MCF 10A (cell line): ENCODE measurements at regions of chr15 and their contacts with region 1.

Region 1: GRCh38 chr15:55917881-55918296 is 75.5 kb downstream of the NEDD4 start:
- DNase-seq: peak; percentile 88
- H3K4me3 Mint-ChIP-seq: no peak overlapping the region
- H3K27ac Mint-ChIP-seq: peak overlapping the region; percentile 67
- H3K4me1 Mint-ChIP-seq: peaks cover 17% of the 10 kb centered on the region
- H3K27me3 Mint-ChIP-seq: no peaks in the 10 kb centered on the region
- CTCF ChIP-seq: peak; percentile 52

Region 2: DNA sequence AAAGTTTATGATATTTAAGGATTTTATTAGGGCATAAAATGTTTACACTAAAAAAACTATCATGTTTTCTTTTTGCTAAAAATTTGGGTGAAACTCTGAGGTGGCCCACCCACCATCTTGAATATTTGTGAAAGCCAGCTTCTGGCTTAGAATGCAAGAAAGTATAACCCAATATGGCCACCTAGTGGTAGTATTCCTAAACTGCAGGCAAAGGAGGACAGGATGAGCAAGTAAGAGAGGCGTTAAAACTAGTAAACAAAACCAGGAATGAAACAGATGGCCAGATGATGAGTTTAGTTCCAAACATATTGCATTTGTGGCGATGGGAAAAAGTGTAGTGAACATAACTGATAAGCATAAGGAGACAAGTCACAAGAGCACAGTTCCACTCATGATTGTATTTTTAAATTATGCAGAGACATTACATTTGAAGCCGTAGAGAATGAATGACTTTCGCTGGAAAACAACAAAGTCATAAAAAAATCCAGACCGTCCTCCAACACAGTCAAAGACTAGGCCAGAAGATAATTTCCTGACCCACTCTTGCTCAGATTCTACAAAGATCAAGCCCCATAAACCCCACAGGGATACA is 71.7 kb before region 1 on chr15:
- CTCF ChIA-PET with region 1: interaction called, 13 read pairs
- POLR2A ChIA-PET with region 1: interaction called, 8 read pairs
- intact Hi-C with region 1: loop called (anchors 5 kb)
- DNase-seq: peak; percentile 81
- H3K4me3 Mint-ChIP-seq: no peak overlapping the region
- H3K27ac Mint-ChIP-seq: no peak overlapping the region
- H3K4me1 Mint-ChIP-seq: peaks cover 6% of the 10 kb centered on the region
- H3K27me3 Mint-ChIP-seq: no peaks in the 10 kb centered on the region
- CTCF ChIP-seq: peak; percentile 79

Region 3: DNA sequence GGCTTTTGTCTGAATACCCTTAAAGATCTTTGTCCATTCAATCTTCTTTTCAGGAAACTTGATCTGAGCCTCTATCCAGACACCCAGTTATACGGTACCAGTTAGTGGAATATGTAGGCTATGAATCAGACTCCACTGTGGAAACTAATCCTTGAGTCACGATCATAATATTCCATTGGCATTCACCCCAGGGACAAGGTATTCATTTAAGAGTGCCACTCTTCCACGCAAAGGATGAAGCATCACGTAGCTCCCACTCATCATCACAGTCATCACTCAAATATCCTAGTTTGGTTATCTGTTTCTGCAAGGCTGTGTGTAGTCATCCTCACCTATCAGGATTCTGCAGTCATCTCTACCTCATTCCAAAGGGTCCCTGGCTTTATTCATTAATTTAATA is 10.1 kb before region 1 on chr15:
- CTCF ChIA-PET with region 1: interaction called, 19 read pairs
- POLR2A ChIA-PET with region 1: interaction called, 64 read pairs
- intact Hi-C with region 1: no loop called
- DNase-seq: peak; percentile 81
- H3K4me3 Mint-ChIP-seq: no peak overlapping the region
- H3K27ac Mint-ChIP-seq: peak overlapping the region; percentile 89
- H3K4me1 Mint-ChIP-seq: peaks cover 50% of the 10 kb centered on the region
- H3K27me3 Mint-ChIP-seq: no peaks in the 10 kb centered on the region
- CTCF ChIP-seq: no peak

Region 4: GRCh38 chr15:55993111-55993803 is 75.4 kb after region 1 on chr15 and contains the start of gene NEDD4:
- CTCF ChIA-PET with region 1: interaction called, 25 read pairs
- POLR2A ChIA-PET with region 1: interaction called, 65 read pairs
- intact Hi-C with region 1: loop called (anchors 2 kb)
- DNase-seq: peak; percentile 90
- H3K4me3 Mint-ChIP-seq: peak within 1 kb of the TSS; percentile 83
- H3K27ac Mint-ChIP-seq: peak within 1 kb of the TSS; percentile 72
- H3K4me1 Mint-ChIP-seq: peaks cover 37% of the 10 kb centered on the region
- H3K27me3 Mint-ChIP-seq: no peaks in the 10 kb centered on the region
- CTCF ChIP-seq: peak; percentile 44
- total RNA-seq, gene NEDD4: 57.7 and 60.3 TPM in 2 replicates

Region 5: GRCh38 chr15:56040081-56041035 is 122.5 kb after region 1 on chr15:
- CTCF ChIA-PET with region 1: interaction called, 5 read pairs
- POLR2A ChIA-PET with region 1: interaction called, 35 read pairs
- intact Hi-C with region 1: no loop called
- DNase-seq: peak; percentile 96
- H3K4me3 Mint-ChIP-seq: peak overlapping the region; percentile 42
- H3K27ac Mint-ChIP-seq: peak overlapping the region; percentile 86
- H3K4me1 Mint-ChIP-seq: peaks cover 34% of the 10 kb centered on the region
- H3K27me3 Mint-ChIP-seq: no peaks in the 10 kb centered on the region
- CTCF ChIP-seq: no peak

Region 6: DNA sequence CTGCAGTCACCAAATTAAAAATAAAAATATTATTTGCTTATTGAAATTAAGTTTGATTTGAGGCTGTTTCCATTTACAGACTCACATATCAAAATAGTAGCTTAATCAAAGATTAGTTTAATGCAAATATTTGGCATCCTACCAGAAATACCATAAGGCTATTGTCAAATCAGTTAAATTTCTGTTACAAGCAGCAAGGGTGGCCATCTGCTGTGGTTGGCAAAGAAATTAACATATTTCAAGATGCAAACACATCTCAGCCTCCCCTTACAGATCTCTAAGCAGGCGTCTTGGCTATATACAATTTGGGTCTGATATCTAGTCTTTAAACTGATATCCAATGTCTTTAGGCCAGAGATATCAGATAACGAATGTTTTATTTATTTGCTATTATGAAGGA is 158.8 kb after region 1 on chr15:
- CTCF ChIA-PET with region 1: no interaction called
- POLR2A ChIA-PET with region 1: no interaction called
- intact Hi-C with region 1: no loop called
- DNase-seq: no peak
- H3K4me3 Mint-ChIP-seq: no peak overlapping the region
- H3K27ac Mint-ChIP-seq: no peak overlapping the region
- H3K4me1 Mint-ChIP-seq: no peaks in the 10 kb centered on the region
- H3K27me3 Mint-ChIP-seq: no peaks in the 10 kb centered on the region
- CTCF ChIP-seq: no peak

Region 7: DNA sequence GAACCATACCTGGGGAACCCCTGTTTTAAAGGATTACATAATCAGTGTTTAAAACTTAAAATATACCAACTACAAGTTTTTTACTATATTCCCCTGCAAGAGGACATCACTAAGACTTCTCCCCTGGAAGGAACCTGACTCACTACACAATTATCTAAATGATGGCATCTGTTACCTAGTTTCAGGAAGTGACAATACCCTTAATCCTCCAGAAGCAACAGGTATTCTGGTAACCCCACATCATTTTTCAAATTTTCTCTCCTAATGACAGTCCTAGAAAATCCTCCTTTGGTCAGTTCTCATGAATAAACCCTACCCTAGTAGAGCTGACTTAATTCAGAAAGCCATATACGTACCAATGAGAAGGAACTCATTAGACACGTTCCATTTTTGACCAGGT is 247.3 kb after region 1 on chr15:
- CTCF ChIA-PET with region 1: no interaction called
- POLR2A ChIA-PET with region 1: no interaction called
- intact Hi-C with region 1: no loop called
- DNase-seq: no peak
- H3K4me3 Mint-ChIP-seq: no peak overlapping the region
- H3K27ac Mint-ChIP-seq: no peak overlapping the region
- H3K4me1 Mint-ChIP-seq: peaks cover 22% of the 10 kb centered on the region
- H3K27me3 Mint-ChIP-seq: no peaks in the 10 kb centered on the region
- CTCF ChIP-seq: no peak